Activated T-helper 1 cell treated with anti-CD3 and anti-CD28 coated beads, Interleukin-12 subunit alpha, Interleukin-12 subunit beta, Interleukin-2, Interleukin-4 antibody, amounts not matched to agents 30 ng/mL and 10 ng/mL and 1 ng/mL, durations not matched to agents 14 hours and 24 hours and 36 hours (primary cell): ENCODE measurements at regions of chr14 and their contacts with region 1.

Region 1: GRCh38 chr14:44912041-44912869 is 49.5 kb downstream of the KLHL28 start:
- DNase-seq: no peak
- H3K4me3 Mint-ChIP-seq: peak overlapping the region; percentile 45
- H3K27ac Mint-ChIP-seq: no peak overlapping the region
- H3K4me1 Mint-ChIP-seq: peaks cover 10% of the 10 kb centered on the region
- H3K27me3 Mint-ChIP-seq: peaks cover 29% of the 10 kb centered on the region

Region 2: GRCh38 chr14:44897045-44897844 is 15.0 kb before region 1 on chr14:
- intact Hi-C with region 1: loop called (anchors 1 kb)
- DNase-seq: peak; percentile 85
- H3K4me3 Mint-ChIP-seq: peak overlapping the region; percentile 93
- H3K27ac Mint-ChIP-seq: peak overlapping the region; percentile 72
- H3K4me1 Mint-ChIP-seq: peaks cover 24% of the 10 kb centered on the region
- H3K27me3 Mint-ChIP-seq: peaks cover 6% of the 10 kb centered on the region